Activated B cell treated with CpG ODN at 0.5 μM for 24 hours (primary cell): ENCODE measurements at regions of chr12 and their contacts with region 1.

Region 1: DNA sequence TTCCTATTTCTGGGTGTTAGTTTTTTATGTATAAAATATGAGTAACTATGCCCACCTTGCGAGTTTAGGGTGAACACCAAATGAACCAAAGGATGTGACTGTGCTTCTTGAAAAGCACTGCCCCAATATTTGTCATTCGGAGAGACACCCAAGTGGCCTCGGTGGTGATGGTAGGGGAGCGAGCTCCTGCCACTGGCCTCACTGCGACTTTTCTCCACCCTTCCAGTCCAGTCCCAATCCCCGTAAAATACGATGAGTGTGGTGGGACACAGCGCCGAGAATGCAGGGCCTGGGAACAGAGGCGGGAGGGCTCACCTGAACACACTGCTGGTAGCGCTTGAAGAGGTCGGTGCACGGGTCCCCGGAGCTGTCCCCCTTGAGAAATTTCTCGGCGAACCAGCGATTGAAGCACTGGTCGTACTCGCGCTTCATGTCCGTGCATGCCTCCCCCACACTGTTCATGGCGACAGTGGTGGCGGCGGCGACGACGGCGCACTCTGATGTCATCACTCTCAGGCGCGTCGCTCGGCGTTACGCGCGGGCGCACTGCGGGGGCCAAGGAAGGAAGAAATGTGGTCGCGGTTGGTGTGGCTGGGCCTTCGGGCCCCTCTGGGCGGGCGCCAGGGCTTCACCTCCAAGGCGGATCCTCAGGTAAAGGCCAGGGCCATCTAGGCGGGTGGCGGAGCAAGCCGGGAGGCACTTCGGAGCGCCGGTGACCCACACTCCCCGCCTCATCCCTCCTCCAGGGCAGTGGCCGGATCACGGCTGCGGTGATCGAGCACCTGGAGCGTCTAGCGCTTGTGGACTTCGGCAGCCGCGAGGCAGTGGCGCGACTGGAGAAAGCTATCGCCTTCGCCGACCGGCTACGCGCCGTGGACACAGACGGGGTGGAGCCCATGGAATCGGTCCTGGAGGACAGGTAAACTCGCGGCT is at the starts of genes GATC and TRIAP1:
- DNase-seq: peak; percentile 92
- ATAC-seq: peak; percentile 95
- H3K4me3 Mint-ChIP-seq: peak within 1 kb of the TSS; percentile 96
- H3K27ac Mint-ChIP-seq: peak within 1 kb of the TSS; percentile 95
- H3K4me1 Mint-ChIP-seq: peaks cover 31% of the 10 kb centered on the region
- H3K27me3 Mint-ChIP-seq: no peaks in the 10 kb centered on the region
- CTCF ChIP-seq: no peak
- total RNA-seq, gene GATC: 33.4 and 35.2 TPM in 2 replicates
- total RNA-seq, gene TRIAP1: 18.2 and 18.6 TPM in 2 replicates

Region 2: DNA sequence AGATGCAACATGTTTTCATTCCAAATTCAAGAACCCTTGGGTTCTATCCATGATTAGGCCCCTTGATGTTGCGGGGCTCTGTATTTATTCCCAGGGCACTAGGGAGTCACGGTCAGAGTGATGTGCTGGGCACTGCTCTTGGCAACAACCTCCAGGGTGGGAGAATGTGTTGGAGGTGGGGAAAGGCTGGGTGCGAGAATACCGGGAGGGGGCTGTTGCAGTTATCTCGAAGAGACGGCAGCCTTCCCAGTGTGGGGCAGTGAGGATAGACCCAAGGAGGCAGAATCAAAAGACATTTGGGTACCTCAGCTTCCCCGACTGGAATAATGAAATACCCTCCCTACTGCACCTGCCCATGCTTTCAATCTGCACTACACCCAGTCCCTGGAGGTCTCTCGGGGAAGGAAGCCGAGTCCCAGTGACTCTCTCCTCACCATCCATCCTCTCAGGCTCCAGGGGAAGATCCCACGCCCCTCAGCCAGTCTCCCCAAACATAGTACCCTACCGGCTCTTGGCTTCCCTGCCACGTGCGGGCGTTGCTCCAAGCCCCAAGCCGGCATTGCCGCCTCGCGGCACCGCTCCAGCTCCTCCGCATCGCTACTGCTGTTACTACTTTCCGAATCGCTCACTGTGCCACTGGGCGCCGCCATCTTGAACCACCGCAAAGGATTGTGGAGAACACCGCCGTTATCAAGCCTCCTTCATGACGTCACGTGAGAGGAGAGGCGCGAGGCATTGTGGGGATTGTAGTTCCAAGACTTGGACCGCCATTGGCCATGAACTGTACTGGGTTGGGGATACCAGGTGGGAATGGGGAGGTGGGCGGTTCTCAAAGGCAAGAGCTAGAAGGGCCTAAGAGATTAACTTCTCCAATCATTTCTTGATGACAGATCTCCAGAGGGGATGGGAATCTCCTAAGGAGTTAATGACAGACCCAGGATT is 569.9 kb after region 1 on chr12 and contains the start of gene C12orf43:
- CTCF ChIA-PET with region 1: no interaction called
- POLR2A ChIA-PET with region 1: no interaction called
- intact Hi-C with region 1: loop called (anchors 1 kb)
- DNase-seq: peak; percentile 80
- ATAC-seq: peak; percentile 98
- H3K4me3 Mint-ChIP-seq: peak within 1 kb of the TSS; percentile 100
- H3K27ac Mint-ChIP-seq: peak within 1 kb of the TSS; percentile 97
- H3K4me1 Mint-ChIP-seq: peaks cover 16% of the 10 kb centered on the region
- H3K27me3 Mint-ChIP-seq: no peaks in the 10 kb centered on the region
- CTCF ChIP-seq: no peak
- total RNA-seq, gene C12orf43: 23.7 and 24.8 TPM in 2 replicates

Region 3: DNA sequence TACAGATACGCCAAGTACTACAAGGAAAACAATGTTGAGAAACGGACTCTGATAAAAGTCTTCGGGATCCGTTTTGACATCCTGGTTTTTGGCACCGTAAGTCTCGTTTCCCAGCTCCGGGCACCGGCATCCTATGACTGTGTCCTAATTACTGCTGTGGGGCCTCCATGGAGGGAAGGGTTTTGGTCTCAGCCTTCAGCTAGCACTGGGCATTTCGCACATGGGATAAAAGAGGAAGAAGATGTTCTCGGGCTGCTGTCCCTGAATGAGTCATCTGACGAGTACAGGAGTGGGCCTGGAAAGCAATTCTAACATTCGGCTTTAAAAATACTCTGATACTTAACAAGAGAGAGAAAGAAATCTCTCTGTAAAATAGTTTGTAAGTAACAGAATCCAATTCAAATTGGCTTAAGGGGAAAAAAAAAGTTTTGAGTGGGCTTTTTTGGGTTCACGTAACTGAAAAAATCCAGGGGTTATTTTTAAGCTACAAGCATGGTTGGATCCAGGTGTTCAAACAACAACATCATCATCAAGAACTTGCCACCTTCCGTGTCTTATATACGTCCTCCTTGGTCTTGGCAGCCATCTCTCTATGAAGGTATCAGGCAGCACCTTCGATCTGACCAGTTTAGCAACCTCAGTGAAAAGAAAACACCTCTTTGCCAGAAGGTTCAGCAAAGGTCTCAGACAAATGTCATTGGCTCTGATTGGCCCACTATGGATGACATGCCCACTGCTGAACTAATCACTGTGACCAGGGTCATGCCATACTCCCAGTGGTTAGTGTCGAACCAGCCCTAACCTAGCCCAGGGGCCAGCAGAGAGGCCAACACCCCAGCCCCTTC is 729.4 kb after region 1 on chr12:
- CTCF ChIA-PET with region 1: no interaction called
- POLR2A ChIA-PET with region 1: no interaction called
- intact Hi-C with region 1: no loop called
- DNase-seq: no peak
- ATAC-seq: peak; percentile 71
- H3K4me3 Mint-ChIP-seq: no peak overlapping the region
- H3K27ac Mint-ChIP-seq: peak overlapping the region; percentile 14
- H3K4me1 Mint-ChIP-seq: peaks cover 11% of the 10 kb centered on the region
- H3K27me3 Mint-ChIP-seq: no peaks in the 10 kb centered on the region
- CTCF ChIP-seq: no peak